Left lung (tissue), 14 donors: ENCODE measurements at regions of chr17 and their contacts with region 1.

Region 1: DNA sequence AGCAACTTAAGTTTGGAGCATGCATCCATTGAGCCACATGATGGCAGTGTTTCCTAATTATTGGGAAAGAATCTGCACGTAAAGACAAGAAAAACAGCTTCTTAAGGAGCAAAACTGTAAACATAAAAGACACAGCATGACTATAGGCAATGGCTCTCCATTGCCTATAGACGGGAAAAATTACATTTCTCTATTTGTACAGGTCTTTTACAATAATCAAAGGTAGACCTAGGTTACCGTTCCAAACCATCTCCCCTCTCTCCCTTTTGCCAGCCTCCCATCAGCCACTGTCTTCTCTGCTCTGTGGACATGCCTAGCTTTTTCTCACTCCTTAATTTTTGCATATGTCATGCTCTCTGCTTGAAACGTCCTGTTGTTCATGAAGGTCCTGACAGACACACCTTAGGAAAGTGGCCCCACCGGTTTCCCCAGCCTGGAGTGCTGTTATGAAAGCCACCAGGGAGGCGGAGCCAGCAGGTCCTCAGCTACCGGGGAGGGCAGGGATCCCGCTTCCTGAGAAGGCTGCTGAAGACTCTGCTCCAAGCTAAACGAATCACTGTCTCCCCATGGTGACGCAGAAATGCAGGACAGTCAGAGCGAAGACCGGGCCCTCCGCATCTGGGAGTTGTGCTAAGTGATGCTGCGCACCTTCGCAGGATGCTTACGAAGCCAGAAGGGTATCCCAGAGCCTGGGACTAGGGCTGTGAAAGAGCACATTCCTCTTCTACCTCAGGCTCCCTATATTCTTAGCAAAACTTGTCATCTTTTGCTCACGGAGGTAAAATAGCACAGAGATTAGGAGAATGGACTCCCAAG is 2.2 kb upstream of the SLC16A11 start:
- DNase-seq: peak; percentile 76 to 86 (median 85)
- ATAC-seq: peak; percentile 76
- H3K4me3 ChIP-seq: peak overlapping the region; percentile 6 to 34
- H3K27ac ChIP-seq: peak overlapping the region; percentile 68 to 77
- H3K4me1 ChIP-seq: peaks cover 15 to 41% of the 10 kb centered on the region in 2 donors
- H3K27me3 ChIP-seq: peaks cover 18 to 61% of the 10 kb centered on the region in 2 donors
- CTCF ChIP-seq: peak; percentile 65 to 68

Region 2: GRCh38 chr17:7136266-7136877 is 90.3 kb after region 1 on chr17:
- intact Hi-C with region 1: loop called in 1 of 2 experiments (anchors 5 kb)
- DNase-seq: peak; percentile 62 to 92 (median 78)
- ATAC-seq: peak; percentile 72
- H3K4me3 ChIP-seq: no peak overlapping the region
- H3K27ac ChIP-seq: peak overlapping the region in 1 of 2 donors; percentile 21
- H3K4me1 ChIP-seq: peaks cover 0 to 42% of the 10 kb centered on the region in 2 donors
- H3K27me3 ChIP-seq: peaks cover 0 to 55% of the 10 kb centered on the region in 2 donors
- CTCF ChIP-seq: peak; percentile 89 to 90

Region 3: DNA sequence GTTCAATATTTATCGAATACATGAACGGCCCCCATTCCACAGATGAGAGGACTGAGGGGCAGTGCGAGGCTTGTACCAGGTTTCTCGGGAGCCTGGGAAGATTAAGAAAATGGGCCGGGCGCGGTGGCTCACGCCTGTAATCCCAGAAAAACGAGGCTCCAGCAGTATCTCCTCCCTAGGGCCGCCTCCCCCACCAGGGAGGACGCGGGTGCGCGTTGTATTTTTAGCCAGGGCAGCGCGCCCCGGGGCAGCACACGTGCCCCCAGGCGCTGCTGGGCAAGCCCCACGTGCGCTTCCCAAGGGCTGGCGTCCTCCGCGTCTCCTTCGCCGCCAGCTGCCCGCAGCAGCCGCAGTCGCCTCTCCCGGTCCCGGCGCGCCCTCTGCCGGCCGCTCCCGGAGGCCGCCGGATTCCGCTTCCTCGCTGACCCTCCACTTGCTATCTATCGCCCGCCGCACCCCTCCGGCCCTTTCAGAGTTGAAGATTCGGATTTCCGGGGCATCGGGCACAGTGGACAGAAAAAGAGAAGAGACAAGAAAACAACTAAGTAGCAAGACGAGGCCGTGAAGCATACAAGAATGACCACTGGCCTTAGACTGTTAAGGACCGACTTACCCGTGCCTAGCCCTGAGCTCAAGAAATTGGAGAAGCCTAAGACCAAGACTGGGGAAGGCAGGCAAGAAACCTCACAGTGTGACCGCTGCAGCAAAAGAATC is 250.2 kb after region 1 on chr17:
- intact Hi-C with region 1: loop called (anchors 10 kb)
- DNase-seq: peak; percentile 70 to 98 (median 82)
- ATAC-seq: peak; percentile 94
- H3K4me3 ChIP-seq: no peak overlapping the region
- H3K27ac ChIP-seq: no peak overlapping the region
- H3K4me1 ChIP-seq: peaks cover 13 to 33% of the 10 kb centered on the region in 2 donors
- H3K27me3 ChIP-seq: peaks cover 26 to 66% of the 10 kb centered on the region in 2 donors
- CTCF ChIP-seq: peak; percentile 86 to 95